Sigmoid colon (tissue), 7 donors: ENCODE measurements at regions of chr18 and their contacts with region 1.

Region 1: DNA sequence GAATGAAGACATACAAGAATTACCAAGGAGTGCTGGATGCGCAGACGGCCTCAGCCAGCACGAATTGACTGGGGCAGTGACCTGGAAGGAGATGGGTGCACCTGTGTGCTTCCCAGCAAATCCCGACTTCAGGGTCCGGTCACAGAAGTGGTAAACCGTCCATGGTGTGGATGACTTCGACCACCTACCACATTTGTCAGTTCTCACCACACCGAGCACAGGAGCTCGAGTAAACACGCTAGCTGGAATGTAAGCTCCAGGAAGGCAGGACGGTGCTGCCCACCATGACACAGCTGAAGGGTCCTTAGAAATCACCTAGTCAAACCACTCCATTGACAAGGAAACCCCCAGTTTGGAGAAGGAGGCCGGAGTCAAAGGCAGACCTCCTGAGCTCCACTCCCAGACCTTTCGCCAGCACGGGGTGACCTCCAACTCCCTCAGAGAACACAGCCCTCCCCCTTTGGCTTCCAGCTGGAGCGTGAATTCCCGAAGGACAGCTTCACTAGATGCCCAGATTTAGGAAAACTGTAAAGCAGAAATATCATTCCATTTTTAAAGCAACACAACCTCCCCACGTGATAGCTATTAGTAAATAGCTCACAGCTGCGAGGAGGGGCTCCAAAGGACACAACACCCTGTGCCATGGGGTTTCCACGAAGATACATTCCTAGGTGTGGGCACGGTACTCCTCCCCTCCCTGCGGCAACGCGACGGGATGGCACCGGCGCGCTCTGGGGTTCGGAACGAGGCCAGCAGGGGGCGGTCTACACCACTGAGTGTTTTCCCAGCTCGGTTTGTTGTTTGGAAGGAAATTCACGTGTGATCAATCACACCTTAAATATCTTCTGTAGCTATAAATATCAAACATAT is 34.1 kb upstream of the GNAL start:
- DNase-seq: no peak
- H3K4me3 ChIP-seq: no peak overlapping the region
- H3K27ac ChIP-seq: no peak overlapping the region
- H3K4me1 ChIP-seq: peaks cover 0 to 6% (median 0%) of the 10 kb centered on the region in 4 donors
- H3K27me3 ChIP-seq: peaks cover 0 to 5% (median 2%) of the 10 kb centered on the region in 3 donors
- CTCF ChIP-seq: peak in 3 of 4 experiments; percentile 44 to 65 (median 50)
- EP300 ChIP-seq: no peak
- POLR2A ChIP-seq: no peak

Region 2: GRCh38 chr18:11411048-11411447 is 243.9 kb before region 1 on chr18:
- intact Hi-C with region 1: no loop called
- DNase-seq: no peak
- H3K4me3 ChIP-seq: no peak overlapping the region
- H3K27ac ChIP-seq: no peak overlapping the region
- H3K4me1 ChIP-seq: no peaks in the 10 kb centered on the region
- H3K27me3 ChIP-seq: no peaks in the 10 kb centered on the region
- CTCF ChIP-seq: no peak
- EP300 ChIP-seq: no peak
- POLR2A ChIP-seq: no peak

Region 3: DNA sequence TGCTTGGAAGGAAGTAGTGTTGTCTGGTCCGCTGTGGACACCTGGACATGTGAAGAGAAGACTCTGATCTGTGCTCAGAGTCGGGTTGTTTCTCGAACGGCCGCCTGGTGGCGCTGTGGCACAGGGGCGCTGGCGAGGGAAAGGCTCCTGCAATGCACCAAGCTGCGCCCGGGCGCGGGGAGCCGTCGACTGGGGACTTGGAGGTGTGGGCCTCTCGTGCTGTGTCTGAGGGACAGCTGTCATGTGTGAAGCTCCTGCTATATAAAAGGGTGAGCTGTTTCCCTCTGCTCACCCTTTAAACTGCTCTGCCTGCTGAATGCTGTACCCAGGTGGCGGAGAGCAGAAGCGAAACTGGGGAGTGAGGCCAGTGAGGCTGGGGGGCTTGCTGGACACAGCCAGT is 78.1 kb after region 1 on chr18:
- intact Hi-C with region 1: loop called (anchors 5 kb)
- DNase-seq: peak; percentile 88
- H3K4me3 ChIP-seq: peak overlapping the region in 3 of 4 donors; percentile 24 to 34 (median 26)
- H3K27ac ChIP-seq: no peak overlapping the region
- H3K4me1 ChIP-seq: peaks cover 0 to 7% (median 0%) of the 10 kb centered on the region in 4 donors
- H3K27me3 ChIP-seq: peaks cover 0 to 4% (median 0%) of the 10 kb centered on the region in 3 donors
- CTCF ChIP-seq: peak; percentile 41 to 91 (median 69)
- EP300 ChIP-seq: no peak
- POLR2A ChIP-seq: no peak

Region 4: DNA sequence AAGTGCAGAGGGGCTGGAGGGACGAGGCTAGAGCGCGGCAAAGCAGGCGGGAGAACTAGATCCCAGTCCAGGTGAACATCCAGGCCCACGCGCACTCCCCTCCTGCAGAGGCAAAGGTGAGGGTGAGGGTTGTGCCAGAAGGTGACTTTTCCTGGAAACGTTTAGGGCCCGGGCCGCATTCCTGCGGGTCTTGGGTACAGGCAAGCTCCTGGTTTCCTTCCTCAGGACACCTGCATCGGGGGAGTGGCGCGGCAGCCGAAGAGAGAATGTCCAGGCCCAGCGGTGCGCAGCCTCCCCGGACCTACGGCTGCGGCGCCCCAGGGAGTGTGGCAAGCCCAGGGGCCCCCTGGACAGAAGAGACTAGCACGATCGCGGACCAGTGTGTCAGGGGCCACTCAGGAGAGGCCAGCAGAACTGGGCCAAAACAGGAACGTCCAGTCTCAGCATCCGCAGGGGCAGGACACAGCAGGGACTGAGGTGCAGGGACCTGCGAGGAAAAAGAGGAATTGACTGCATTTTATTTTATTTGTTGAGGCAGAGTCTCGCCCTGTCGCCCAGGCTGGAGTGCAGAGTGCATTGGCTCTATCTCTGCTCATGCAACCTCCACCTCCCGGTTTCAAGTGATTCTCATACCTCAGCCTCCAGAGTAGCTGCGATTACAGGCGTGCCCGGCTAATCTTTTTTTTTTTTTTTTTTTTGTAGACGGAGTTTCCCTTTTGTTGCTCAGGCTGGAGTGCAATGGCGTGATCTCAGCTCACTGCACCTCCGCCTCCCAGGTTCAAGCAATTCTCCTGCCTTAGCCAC is 317.6 kb after region 1 on chr18:
- intact Hi-C with region 1: no loop called
- DNase-seq: peak; percentile 56
- H3K4me3 ChIP-seq: no peak overlapping the region
- H3K27ac ChIP-seq: no peak overlapping the region
- H3K4me1 ChIP-seq: no peaks in the 10 kb centered on the region
- H3K27me3 ChIP-seq: no peaks in the 10 kb centered on the region
- CTCF ChIP-seq: no peak
- EP300 ChIP-seq: no peak
- POLR2A ChIP-seq: no peak